ENCODE measurements at regions of chr2 and their contacts with region 1.

Region 1: DNA sequence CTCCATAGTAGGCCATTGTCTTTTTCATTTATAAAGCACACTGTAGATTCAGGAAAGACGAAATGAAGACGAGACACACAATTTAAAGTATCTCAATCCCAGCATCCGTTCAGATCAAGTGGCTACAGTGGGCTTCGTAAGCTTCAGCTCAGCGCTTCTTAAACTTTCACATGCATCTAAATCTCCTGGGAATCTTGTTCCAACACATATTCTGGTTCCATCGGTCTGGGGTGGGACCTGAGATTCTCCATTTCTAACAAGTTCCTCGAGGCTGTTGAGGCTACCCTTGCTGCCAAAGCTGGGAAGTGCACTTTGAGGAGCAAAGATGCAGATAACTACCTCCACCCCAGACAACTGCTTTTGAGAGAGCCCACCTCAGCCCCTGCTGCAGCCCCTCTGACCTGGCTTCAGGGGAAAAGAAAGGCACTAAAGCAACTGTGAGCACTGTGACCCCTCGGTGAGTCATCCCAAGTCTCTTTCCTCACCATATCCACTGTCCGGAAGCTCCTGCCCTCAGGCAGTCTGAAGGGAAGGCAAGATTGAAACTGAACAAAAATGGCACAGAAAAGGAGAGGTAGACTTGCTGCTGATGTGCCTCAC is 201.1 kb upstream of the FBXO11 start:
- DNase-seq: peak; percentile 77
- ATAC-seq: no peak
- H3K4me3 ChIP-seq: no peak overlapping the region
- H3K27ac ChIP-seq: peak overlapping the region; percentile 76
- H3K4me1 ChIP-seq: peaks cover 17% of the 10 kb centered on the region
- H3K27me3 ChIP-seq: no peaks in the 10 kb centered on the region
- CTCF ChIP-seq: 0 out of 2 replicates have a peak, but pooled peaks have one; percentile 7
- POLR2A ChIP-seq: no peak
- RAD21 ChIP-seq: no peak

Region 2: GRCh38 chr2:47334356-47335136 is 772.9 kb before region 1 on chr2:
- CTCF ChIA-PET with region 1: no interaction called
- POLR2A ChIA-PET with region 1: no interaction called
- dilution Hi-C with region 1: no loop called
- in situ Hi-C with region 1: no loop called
- intact Hi-C with region 1: loop called (anchors 2 kb)
- DNase-seq: no peak
- ATAC-seq: no peak
- H3K4me3 ChIP-seq: no peak overlapping the region
- H3K27ac ChIP-seq: no peak overlapping the region
- H3K4me1 ChIP-seq: no peaks in the 10 kb centered on the region
- H3K27me3 ChIP-seq: peaks cover 8% of the 10 kb centered on the region
- CTCF ChIP-seq: no peak
- POLR2A ChIP-seq: no peak
- RAD21 ChIP-seq: no peak

Region 3: GRCh38 chr2:47767880-47768609 is 339.4 kb before region 1 on chr2:
- CTCF ChIA-PET with region 1: no interaction called
- POLR2A ChIA-PET with region 1: no interaction called
- dilution Hi-C with region 1: no loop called
- in situ Hi-C with region 1: no loop called
- intact Hi-C with region 1: loop called (anchors 5 kb)
- DNase-seq: peak; percentile 30
- ATAC-seq: peak; percentile 91
- H3K4me3 ChIP-seq: peak overlapping the region; percentile 49; the same call in 1 of the 2 replicates
- H3K27ac ChIP-seq: no peak overlapping the region
- H3K4me1 ChIP-seq: peaks cover 2% of the 10 kb centered on the region; the same call in 1 of the 2 replicates
- H3K27me3 ChIP-seq: peaks cover 8% of the 10 kb centered on the region; the same call in 1 of the 2 replicates
- CTCF ChIP-seq: peak; percentile 92
- POLR2A ChIP-seq: 0 out of 2 replicates have a peak, but pooled peaks have one; percentile 29
- RAD21 ChIP-seq: peak; percentile 95

Region 4: DNA sequence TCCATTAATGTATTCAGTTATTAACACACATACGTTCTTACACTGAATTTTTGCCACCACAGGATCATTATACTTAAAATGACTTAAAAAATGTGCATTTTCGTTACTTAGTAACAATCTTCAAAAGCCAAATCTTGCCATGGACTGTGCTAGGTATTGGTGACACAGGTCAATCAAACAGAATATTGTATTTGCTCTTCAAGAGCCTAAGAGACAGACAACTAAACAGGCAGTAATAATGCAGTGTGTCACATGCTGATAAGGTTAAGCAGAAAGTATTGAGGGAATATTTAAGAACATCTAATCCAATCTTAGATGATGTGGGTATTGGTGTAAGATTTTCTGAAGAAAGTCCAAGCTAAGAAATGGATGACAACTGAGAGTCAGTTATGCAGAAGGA is 258.1 kb before region 1 on chr2:
- CTCF ChIA-PET with region 1: interaction called, 13 read pairs
- POLR2A ChIA-PET with region 1: no interaction called
- dilution Hi-C with region 1: no loop called
- in situ Hi-C with region 1: no loop called
- intact Hi-C with region 1: no loop called
- DNase-seq: no peak
- ATAC-seq: no peak
- H3K4me3 ChIP-seq: no peak overlapping the region
- H3K27ac ChIP-seq: no peak overlapping the region
- H3K4me1 ChIP-seq: peaks cover 4% of the 10 kb centered on the region; the same call in 1 of the 2 replicates
- H3K27me3 ChIP-seq: no peaks in the 10 kb centered on the region
- CTCF ChIP-seq: no peak
- POLR2A ChIP-seq: no peak
- RAD21 ChIP-seq: no peak

Region 5: DNA sequence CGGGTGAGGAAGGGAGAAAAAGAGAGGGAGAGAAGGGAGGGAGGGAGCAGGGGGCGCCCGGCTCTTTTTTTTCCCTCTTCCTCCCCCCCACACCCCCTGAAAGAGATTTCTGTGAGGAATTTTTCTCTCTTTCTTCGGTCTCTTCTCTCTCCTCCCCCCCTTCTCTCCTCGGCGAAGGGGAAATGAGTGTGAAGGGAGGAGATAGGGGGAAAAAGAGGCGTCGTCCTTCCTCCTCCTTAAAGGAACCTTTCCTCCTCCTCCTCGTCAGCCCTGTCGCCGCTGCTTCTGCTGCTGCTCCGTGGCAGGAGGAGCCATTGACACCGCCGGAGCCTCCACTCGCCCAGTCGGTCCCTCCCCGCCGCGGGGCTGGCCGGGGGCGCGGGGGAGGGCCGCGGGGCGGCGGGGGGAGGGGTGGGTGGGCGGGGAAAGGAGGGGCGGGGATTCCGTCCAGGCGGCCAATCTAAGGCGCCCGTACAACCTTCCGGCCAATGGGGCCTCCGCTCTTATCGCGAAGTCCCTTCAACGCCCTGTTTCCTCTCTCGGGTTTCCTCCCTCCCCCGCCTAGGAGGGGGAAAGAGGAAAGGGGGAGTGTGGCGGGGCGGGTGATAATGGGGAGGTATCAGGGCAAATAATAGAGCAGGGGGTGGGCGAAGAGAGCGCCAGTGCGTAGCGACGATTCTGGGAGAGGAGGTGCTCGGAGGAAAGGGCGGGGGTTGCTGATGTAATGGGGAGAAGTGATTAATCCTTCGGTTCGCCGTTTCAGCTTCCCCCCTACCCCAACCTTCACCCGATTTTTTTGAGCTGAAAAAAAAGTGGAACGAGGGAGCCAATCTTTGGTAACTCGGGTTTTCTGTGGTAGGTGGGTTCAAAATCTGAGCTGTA is 201.0 kb before region 1 on chr2 and contains the start of gene FBXO11:
- CTCF ChIA-PET with region 1: interaction called, 3 read pairs
- POLR2A ChIA-PET with region 1: no interaction called
- dilution Hi-C with region 1: no loop called
- in situ Hi-C with region 1: no loop called
- intact Hi-C with region 1: loop called (anchors 1 kb)
- DNase-seq: peak; percentile 98
- ATAC-seq: peak; percentile 88
- H3K4me3 ChIP-seq: peak within 1 kb of the TSS; percentile 96
- H3K27ac ChIP-seq: peak within 1 kb of the TSS; percentile 86
- H3K4me1 ChIP-seq: no peaks in the 10 kb centered on the region
- H3K27me3 ChIP-seq: no peaks in the 10 kb centered on the region
- CTCF ChIP-seq: no peak; the same call in none of the 2 replicates
- POLR2A ChIP-seq: peak; percentile 98
- RAD21 ChIP-seq: no peak
- total RNA-seq, gene FBXO11: 27.1 and 32.2 TPM in 2 replicates